ENCODE measurements at regions of chr11 and their contacts with region 1.

Region 1: GRCh38 chr11:120235024-120235861 is 4.7 kb upstream of the POU2F3 start:
- DNase-seq: peak; percentile 70 to 77
- H3K4me3 ChIP-seq: no peak overlapping the region
- H3K27ac ChIP-seq: no peak overlapping the region
- H3K4me1 ChIP-seq: peaks cover 15% of the 10 kb centered on the region
- H3K27me3 ChIP-seq: peaks cover 4% of the 10 kb centered on the region; the same call in 1 of the 2 replicates
- CTCF ChIP-seq: peak; percentile 97

Region 2: GRCh38 chr11:120432056-120433018 is 197.1 kb after region 1 on chr11:
- CTCF ChIA-PET with region 1: no interaction called
- POLR2A ChIA-PET with region 1: no interaction called
- intact Hi-C with region 1: loop called (anchors 5 kb)
- DNase-seq: peak; percentile 60 to 98
- H3K4me3 ChIP-seq: no peak overlapping the region
- H3K27ac ChIP-seq: peak overlapping the region; percentile 47
- H3K4me1 ChIP-seq: peaks cover 19% of the 10 kb centered on the region
- H3K27me3 ChIP-seq: no peaks in the 10 kb centered on the region
- CTCF ChIP-seq: no peak

Region 3: DNA sequence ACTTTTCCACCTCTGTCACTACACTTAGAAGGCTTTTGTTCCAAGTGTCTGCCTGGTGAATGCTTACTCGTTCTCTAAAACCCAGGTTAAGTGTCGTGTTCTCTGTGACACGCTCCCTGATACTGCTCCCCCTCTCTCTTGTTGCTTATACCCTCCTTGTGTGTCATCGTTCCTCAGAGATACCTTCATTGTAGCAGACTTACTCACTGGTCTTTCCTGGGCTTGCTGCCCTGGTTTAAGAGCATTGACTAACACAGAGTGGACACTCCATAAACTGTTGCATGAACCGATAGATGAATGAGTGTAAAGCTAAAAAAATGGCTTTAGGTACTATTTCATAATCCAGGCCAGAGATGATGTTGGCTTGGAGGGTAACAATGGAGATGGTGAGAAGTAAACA is 447.6 kb after region 1 on chr11:
- CTCF ChIA-PET with region 1: interaction called, 3 read pairs
- POLR2A ChIA-PET with region 1: no interaction called
- intact Hi-C with region 1: loop called (anchors 10 kb)
- DNase-seq: no peak
- H3K4me3 ChIP-seq: no peak overlapping the region
- H3K27ac ChIP-seq: no peak overlapping the region
- H3K4me1 ChIP-seq: no peaks in the 10 kb centered on the region
- H3K27me3 ChIP-seq: peaks cover 95% of the 10 kb centered on the region
- CTCF ChIP-seq: no peak

Region 4: DNA sequence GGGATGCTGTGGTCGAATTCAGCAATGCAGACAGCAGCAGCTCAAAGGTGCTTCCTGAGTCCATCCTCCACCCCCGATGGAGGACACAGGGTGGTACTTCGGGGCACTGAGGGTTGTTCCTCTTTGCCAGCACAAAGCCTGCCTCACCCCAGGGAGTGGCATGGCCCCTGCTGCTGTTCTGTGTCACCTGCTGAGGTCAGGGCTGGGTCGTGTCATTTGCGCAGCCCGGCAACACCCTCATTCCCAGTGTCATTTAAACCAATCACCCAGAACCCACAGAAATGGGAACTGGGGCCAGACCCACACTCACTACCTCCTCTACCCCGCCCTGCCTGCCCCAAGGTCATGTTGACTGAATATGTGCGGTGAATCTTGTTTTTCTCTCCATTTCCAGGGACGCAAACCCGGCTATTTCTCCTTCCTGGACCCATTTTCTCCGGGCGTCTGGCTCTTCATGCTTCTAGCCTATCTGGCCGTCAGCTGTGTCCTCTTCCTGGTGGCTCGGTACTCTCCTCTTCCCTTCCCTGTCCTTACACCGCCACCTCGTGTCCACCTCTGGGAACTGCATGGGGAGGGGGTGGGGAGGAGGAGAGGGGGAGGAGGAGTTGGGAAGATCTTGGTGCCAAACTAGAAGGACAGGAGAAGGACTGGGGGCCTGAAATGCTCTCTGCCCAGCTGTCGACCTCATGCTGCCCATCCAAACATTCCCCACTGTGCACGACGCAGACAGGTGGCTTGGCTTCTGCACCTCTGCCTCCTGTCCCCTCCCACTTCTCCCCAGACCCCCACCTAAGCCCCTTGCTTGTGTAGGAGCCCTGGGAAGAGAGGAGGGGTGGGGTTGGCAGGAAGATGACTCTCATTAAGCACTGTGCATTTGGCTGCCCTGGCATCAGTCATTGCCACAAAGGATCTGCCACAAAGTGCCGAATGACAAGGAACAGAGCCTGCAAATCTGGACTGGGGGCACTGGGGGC is 717.5 kb after region 1 on chr11:
- CTCF ChIA-PET with region 1: no interaction called
- POLR2A ChIA-PET with region 1: no interaction called
- intact Hi-C with region 1: loop called (anchors 10 kb)
- DNase-seq: peak; percentile 60 to 61
- H3K4me3 ChIP-seq: peak overlapping the region; percentile 7; the same call in 1 of the 2 replicates
- H3K27ac ChIP-seq: no peak overlapping the region
- H3K4me1 ChIP-seq: 0 out of 2 replicates have a peak, but pooled peaks cover 4% of the 10 kb centered on the region
- H3K27me3 ChIP-seq: peaks cover 60% of the 10 kb centered on the region
- CTCF ChIP-seq: peak; percentile 99

Region 5: GRCh38 chr11:121194731-121195596 is 959.7 kb after region 1 on chr11:
- CTCF ChIA-PET with region 1: no interaction called
- POLR2A ChIA-PET with region 1: no interaction called
- intact Hi-C with region 1: loop called (anchors 10 kb)
- DNase-seq: peak in 1 of 2 experiments; percentile 29
- H3K4me3 ChIP-seq: no peak overlapping the region
- H3K27ac ChIP-seq: no peak overlapping the region
- H3K4me1 ChIP-seq: no peaks in the 10 kb centered on the region
- H3K27me3 ChIP-seq: peaks cover 97% of the 10 kb centered on the region
- CTCF ChIP-seq: peak; percentile 97

Measured in PC-9 (cell line).